Psoas muscle (tissue), 8 donors: ENCODE measurements at regions of chr15 and their contacts with region 1.

Region 1: DNA sequence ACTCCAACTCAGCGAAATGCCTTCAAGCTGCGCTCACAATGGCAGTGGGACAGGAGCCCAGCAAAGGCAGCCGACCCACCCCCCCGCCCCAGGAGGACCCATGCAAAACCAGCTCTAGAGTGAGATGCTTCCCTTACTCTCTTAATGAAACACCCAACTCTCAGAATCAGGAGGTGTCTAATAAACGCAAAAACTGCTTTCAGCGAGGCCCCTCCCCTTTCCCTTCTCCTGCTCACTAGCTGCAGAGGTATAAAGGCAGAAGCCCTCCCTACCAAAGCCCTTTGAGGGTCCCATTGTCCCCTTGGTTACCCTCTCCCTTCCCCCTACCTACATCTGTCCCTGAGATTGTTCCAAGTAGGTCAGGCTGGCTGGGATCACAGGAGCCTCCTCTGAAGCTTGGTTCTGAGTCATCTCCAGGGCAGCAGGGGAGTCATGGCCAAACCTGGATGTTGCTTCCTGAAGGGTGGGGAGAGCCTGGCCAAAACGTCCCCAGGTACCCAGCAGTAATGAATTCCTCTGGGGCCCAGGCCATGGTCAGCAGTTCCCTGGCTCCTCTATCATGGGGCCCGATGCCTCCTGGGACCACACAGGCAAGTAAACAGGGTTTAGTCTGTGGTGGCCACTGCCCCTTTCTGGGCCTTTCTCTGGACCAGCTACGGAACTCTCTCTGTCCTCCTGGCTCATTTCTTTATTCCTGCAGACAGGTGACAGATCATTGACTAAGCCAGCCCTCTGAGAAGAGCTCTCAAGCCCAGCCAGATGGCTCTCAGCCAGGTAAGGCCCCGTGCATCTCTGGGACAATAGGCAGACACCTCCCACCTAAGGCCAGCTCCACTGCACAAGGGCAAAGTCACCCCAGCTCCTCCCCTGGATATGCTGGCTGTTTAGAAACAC is 8.6 kb downstream of the KLHL25 start:
- DNase-seq: peak; percentile 57 to 82
- ATAC-seq: peak; percentile 92 to 96 (median 94)
- H3K4me3 ChIP-seq: peak overlapping the region; percentile 32
- H3K27ac ChIP-seq: peak overlapping the region; percentile 89
- H3K4me1 ChIP-seq: peaks cover 58% of the 10 kb centered on the region
- H3K27me3 ChIP-seq: no peaks in the 10 kb centered on the region
- CTCF ChIP-seq: no peak

Region 2: GRCh38 chr15:85337425-85338074 is 448.6 kb before region 1 on chr15:
- intact Hi-C with region 1: no loop called
- DNase-seq: no peak
- ATAC-seq: peak in 3 of 4 donors; percentile 39 to 53 (median 42)
- H3K4me3 ChIP-seq: no peak overlapping the region
- H3K27ac ChIP-seq: peak overlapping the region; percentile 0
- H3K4me1 ChIP-seq: no peaks in the 10 kb centered on the region
- H3K27me3 ChIP-seq: no peaks in the 10 kb centered on the region
- CTCF ChIP-seq: no peak

Region 3: DNA sequence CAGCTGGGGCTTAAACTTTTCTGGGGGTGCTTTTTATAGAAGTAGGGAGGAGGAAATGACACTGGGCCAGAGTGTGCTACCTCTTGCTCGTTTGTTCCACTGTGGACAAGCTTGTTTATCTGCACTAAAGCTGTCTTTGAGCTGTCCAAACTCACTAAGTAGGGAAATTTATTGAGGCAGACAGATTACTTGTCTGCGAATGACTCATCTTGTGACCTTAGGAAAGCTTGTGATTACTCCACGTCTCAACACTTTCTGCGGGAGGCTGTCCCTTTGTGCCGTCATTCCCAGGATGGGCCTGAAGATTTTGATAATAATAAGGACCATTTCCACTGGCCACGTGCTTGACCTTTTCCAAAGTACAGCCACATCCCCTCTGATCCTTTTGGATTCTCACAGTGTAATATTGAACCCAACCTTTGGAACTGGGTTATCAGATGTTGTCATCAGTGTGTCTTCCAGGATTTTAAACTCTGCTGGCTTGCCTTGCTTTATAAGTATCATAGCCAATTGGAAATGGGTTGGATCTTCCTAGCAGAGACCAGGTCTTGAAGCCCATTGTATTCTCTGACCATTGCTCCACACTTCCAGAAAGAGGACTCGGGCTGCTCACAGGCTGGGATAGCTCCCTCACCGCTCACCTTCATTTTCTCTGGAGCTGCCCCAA is 378.2 kb after region 1 on chr15:
- intact Hi-C with region 1: loop called in 1 of 2 experiments (anchors 5 kb)
- DNase-seq: peak; percentile 60 to 66
- ATAC-seq: peak; percentile 65 to 78 (median 74)
- H3K4me3 ChIP-seq: no peak overlapping the region
- H3K27ac ChIP-seq: peak overlapping the region; percentile 92
- H3K4me1 ChIP-seq: peaks cover 64% of the 10 kb centered on the region
- H3K27me3 ChIP-seq: no peaks in the 10 kb centered on the region
- CTCF ChIP-seq: no peak